Endothelial cell of umbilical vein (primary cell): ENCODE measurements at regions of chr9 and their contacts with region 1.

Region 1: GRCh38 chr9:77751341-77752091 is 103.4 kb upstream of the GNA14 start:
- DNase-seq: peak; percentile 85
- H3K4me3 ChIP-seq: no peak overlapping the region
- H3K27ac ChIP-seq: peak overlapping the region; percentile 55
- H3K4me1 ChIP-seq: peaks cover 24% of the 10 kb centered on the region
- H3K27me3 ChIP-seq: no peaks in the 10 kb centered on the region
- CTCF ChIP-seq: peak; percentile 40 to 56
- POLR2A ChIP-seq: no peak

Region 2: GRCh38 chr9:77177161-77177893 is 574.2 kb before region 1 on chr9 and contains the start of gene VPS13A:
- CTCF ChIA-PET with region 1: no interaction called
- POLR2A ChIA-PET with region 1: no interaction called
- dilution Hi-C with region 1: no loop called
- intact Hi-C with region 1: loop called (anchors 5 kb)
- DNase-seq: peak; percentile 91
- H3K4me3 ChIP-seq: peak within 1 kb of the TSS; percentile 86 to 91 (median 87)
- H3K27ac ChIP-seq: peak within 1 kb of the TSS; percentile 44
- H3K4me1 ChIP-seq: peaks cover 12% of the 10 kb centered on the region
- H3K27me3 ChIP-seq: peaks cover 3% of the 10 kb centered on the region in 2 experiments
- CTCF ChIP-seq: peak; percentile 18 to 50
- POLR2A ChIP-seq: peak; percentile 40
- total RNA-seq, gene VPS13A: 29.8 and 33.3 TPM in 2 replicates

Region 3: GRCh38 chr9:77440057-77440456 is 311.5 kb before region 1 on chr9:
- CTCF ChIA-PET with region 1: interaction called, 108 read pairs
- POLR2A ChIA-PET with region 1: no interaction called
- dilution Hi-C with region 1: no loop called
- intact Hi-C with region 1: no loop called
- DNase-seq: no peak
- H3K4me3 ChIP-seq: no peak overlapping the region
- H3K27ac ChIP-seq: no peak overlapping the region
- H3K4me1 ChIP-seq: no peaks in the 10 kb centered on the region
- H3K27me3 ChIP-seq: no peaks in the 10 kb centered on the region
- CTCF ChIP-seq: no peak
- POLR2A ChIP-seq: no peak

Region 4: GRCh38 chr9:77514886-77515711 is 236.4 kb before region 1 on chr9:
- CTCF ChIA-PET with region 1: interaction called, 24 read pairs
- POLR2A ChIA-PET with region 1: interaction called, 4 read pairs
- dilution Hi-C with region 1: no loop called
- intact Hi-C with region 1: loop called (anchors 1 kb)
- DNase-seq: peak; percentile 94
- H3K4me3 ChIP-seq: no peak overlapping the region
- H3K27ac ChIP-seq: peak overlapping the region; percentile 82
- H3K4me1 ChIP-seq: peaks cover 31% of the 10 kb centered on the region
- H3K27me3 ChIP-seq: no peaks in the 10 kb centered on the region
- CTCF ChIP-seq: no peak
- POLR2A ChIP-seq: peak; percentile 57

Region 5: GRCh38 chr9:77663754-77664153 is 87.8 kb before region 1 on chr9:
- CTCF ChIA-PET with region 1: interaction called, 30 read pairs
- POLR2A ChIA-PET with region 1: no interaction called
- dilution Hi-C with region 1: no loop called
- intact Hi-C with region 1: loop called (anchors 1 kb)
- DNase-seq: peak; percentile 78
- H3K4me3 ChIP-seq: no peak overlapping the region
- H3K27ac ChIP-seq: no peak overlapping the region
- H3K4me1 ChIP-seq: peaks cover 9% of the 10 kb centered on the region
- H3K27me3 ChIP-seq: no peaks in the 10 kb centered on the region
- CTCF ChIP-seq: no peak
- POLR2A ChIP-seq: no peak

Region 6: GRCh38 chr9:77712533-77713130 is 38.9 kb before region 1 on chr9:
- CTCF ChIA-PET with region 1: interaction called, 16 read pairs
- POLR2A ChIA-PET with region 1: interaction called, 7 read pairs
- dilution Hi-C with region 1: no loop called
- intact Hi-C with region 1: loop called (anchors 1 kb)
- DNase-seq: peak; percentile 81
- H3K4me3 ChIP-seq: peak overlapping the region in 1 of 3 experiments; percentile 19
- H3K27ac ChIP-seq: peak overlapping the region; percentile 97
- H3K4me1 ChIP-seq: peaks cover 69% of the 10 kb centered on the region
- H3K27me3 ChIP-seq: no peaks in the 10 kb centered on the region
- CTCF ChIP-seq: no peak
- POLR2A ChIP-seq: no peak

Region 7: DNA sequence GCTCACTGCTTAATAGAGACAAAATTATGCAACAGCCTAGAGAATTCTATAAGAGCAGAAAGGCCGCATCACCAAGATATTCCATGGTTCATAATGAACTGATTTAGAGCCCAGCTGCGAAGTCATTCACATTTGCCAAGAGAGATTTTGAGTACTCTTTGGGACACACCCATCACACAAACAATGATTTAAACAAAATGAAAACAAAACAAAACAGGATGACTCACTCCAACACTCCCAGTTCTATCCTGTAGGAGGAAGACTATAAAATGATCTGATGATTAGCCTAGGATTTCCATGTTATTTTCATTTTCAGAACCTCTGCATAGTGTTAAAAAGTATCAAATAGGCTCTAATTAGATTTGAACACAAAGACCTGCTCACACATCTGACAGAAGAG is 42.4 kb after region 1 on chr9:
- CTCF ChIA-PET with region 1: no interaction called
- POLR2A ChIA-PET with region 1: no interaction called
- dilution Hi-C with region 1: no loop called
- intact Hi-C with region 1: no loop called
- DNase-seq: peak; percentile 74
- H3K4me3 ChIP-seq: no peak overlapping the region
- H3K27ac ChIP-seq: peak overlapping the region; percentile 39
- H3K4me1 ChIP-seq: peaks cover 12% of the 10 kb centered on the region
- H3K27me3 ChIP-seq: no peaks in the 10 kb centered on the region
- CTCF ChIP-seq: no peak
- POLR2A ChIP-seq: no peak

Region 8: GRCh38 chr9:78121488-78121887 is 370.0 kb after region 1 on chr9:
- CTCF ChIA-PET with region 1: interaction called, 21 read pairs
- POLR2A ChIA-PET with region 1: no interaction called
- dilution Hi-C with region 1: no loop called
- intact Hi-C with region 1: loop called (anchors 1 kb)
- DNase-seq: peak; percentile 76
- H3K4me3 ChIP-seq: no peak overlapping the region
- H3K27ac ChIP-seq: no peak overlapping the region
- H3K4me1 ChIP-seq: no peaks in the 10 kb centered on the region
- H3K27me3 ChIP-seq: no peaks in the 10 kb centered on the region
- CTCF ChIP-seq: peak; percentile 64 to 65
- POLR2A ChIP-seq: no peak